AG04449 (cell line): ENCODE measurements at regions of chr12 and their contacts with region 1.

Region 1: DNA sequence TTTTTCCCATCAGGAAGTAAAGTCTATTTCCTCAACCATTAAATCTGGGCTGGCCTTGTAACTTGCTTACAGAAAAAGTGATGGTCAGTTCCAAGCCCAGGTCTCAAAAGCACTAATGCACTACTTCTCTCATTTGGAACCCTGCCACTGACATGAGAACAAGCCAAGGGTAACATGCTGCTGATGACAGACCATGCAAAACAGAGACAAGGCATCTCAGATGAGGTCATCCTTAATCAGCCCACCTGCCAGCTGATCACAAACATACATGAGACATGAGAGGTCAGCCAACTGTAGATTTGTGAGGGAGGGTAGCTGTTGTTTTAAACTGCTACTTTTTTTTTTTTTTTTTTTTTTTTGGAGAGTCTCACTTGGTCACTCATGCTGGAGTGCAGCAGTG is 16.2 kb downstream of the TWF1 start:
- DNase-seq: no peak
- H3K4me3 ChIP-seq: no peak overlapping the region
- CTCF ChIP-seq: no peak

Region 2: DNA sequence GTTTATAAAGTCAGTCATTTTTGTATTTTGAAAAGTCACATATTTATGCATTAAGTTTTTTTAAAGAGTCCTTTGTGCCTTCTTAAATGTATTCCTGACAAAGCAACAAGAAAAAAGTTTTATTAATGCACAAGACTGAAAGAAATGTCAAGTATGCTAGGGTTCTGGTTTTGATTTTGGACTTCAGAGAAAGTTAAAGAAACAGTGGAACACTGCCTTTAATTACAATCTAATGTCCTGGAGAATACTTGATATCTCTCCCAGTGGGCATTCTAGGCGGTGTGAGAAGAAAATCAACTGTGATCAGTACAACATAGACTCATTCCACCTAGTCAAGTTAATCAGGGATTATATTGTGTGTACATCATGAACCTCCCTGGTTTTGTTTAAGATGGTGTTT is 1250.2 kb before region 1 on chr12:
- CTCF ChIA-PET with region 1: no interaction called
- POLR2A ChIA-PET with region 1: no interaction called
- DNase-seq: no peak
- H3K4me3 ChIP-seq: no peak overlapping the region
- CTCF ChIP-seq: no peak

Region 3: DNA sequence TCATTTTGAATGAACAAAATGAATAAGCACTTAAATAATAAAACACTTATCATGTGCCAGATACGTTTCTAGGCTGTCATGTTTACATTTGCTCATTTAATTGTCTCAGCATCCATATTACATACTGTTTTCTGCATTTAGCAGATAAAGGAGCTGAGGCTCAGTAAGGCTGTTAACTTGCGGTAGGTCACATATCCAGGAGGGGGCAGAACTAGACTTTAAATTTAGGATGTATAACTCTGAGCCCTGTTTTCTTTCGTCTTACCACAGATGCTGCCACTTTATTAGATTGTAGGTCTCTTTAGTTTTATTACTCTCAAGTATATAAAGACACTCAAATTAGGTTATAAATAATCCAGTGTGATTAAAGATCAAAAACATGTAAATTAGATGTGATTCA is 13.4 kb before region 1 on chr12:
- CTCF ChIA-PET with region 1: interaction called, 16 read pairs
- POLR2A ChIA-PET with region 1: interaction called, 3 read pairs
- DNase-seq: no peak
- H3K4me3 ChIP-seq: no peak overlapping the region
- CTCF ChIP-seq: peak; percentile 31